H1 (cell line): ENCODE measurements at regions of chr15 and their contacts with region 1.

Region 1: GRCh38 chr15:45510758-45511280 is 11.7 kb downstream of the SLC30A4 start:
- DNase-seq: no peak
- H3K4me3 ChIP-seq: no peak overlapping the region
- H3K27ac ChIP-seq: no peak overlapping the region
- H3K4me1 ChIP-seq: no peaks in the 10 kb centered on the region
- H3K27me3 ChIP-seq: no peaks in the 10 kb centered on the region; a peak in 1 of 7 replicates
- CTCF ChIP-seq: no peak
- EP300 ChIP-seq: no peak
- POLR2A ChIP-seq: no peak
- RAD21 ChIP-seq: no peak

Region 2: DNA sequence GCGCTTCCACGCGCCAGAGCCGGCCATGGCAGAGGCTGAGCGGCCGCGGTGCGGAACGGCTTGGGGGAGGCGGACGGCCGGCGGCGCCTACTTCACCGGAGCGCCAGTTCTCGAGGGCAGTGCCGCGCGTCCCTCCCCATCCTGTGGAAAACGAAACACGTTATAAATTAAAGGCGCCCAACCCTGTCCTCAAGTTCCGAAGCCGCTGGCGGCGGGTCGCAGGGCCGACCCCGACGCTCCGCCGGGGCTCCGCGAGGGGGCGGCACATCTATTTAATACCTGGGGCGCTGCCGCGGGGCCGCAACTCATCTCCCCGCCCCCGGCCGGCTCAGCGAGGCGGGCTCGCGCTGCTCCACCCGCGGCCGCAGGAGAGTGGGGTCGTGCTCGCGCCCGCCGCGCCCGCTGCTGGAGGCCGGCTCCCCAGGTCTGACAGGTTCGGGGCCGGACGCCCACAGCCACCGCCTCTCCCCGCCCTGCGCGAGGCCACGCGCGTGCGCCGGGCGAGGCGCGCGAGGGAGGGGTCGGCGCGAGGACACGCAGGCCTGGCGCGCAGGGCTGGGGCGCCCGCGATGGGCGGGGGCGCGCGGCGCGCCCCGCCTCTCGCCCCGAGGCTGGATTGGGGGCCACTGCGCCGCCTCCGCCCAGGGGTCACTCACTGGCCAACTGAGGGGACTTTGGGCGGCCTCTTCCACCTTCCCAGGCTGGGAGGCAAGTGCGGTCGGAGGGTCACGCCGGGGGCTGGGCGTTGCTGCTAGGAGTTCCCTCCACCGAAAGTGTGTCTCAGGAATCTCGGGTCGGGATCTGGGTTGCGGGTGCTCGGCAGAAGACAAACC is 11.7 kb after region 1 on chr15 and contains the start of gene SLC30A4:
- CTCF ChIA-PET with region 1: interaction called, 12 read pairs
- POLR2A ChIA-PET with region 1: interaction called, 3 read pairs
- DNase-seq: peak; percentile 9 to 63
- H3K4me3 ChIP-seq: peak within 1 kb of the TSS; percentile 38 to 59 (median 44)
- H3K27ac ChIP-seq: no peak within 1 kb of the TSS
- H3K4me1 ChIP-seq: peaks cover 0 to 3% (median 0%) of the 10 kb centered on the region in 4 experiments; a peak in 3 of 7 replicates
- H3K27me3 ChIP-seq: peaks cover 28 to 52% (median 41%) of the 10 kb centered on the region in 4 experiments
- CTCF ChIP-seq: peak; percentile 4 to 45 (median 29)
- EP300 ChIP-seq: no peak
- POLR2A ChIP-seq: no peak
- RAD21 ChIP-seq: peak in 1 of 2 experiments; percentile 42; a peak in 2 of 4 replicates
- total RNA-seq, gene SLC30A4: 0.07 TPM in 1 of 2 replicates, not detected in the other